ENCODE measurements at regions of chr2 and their contacts with region 1.

Region 1: GRCh38 chr2:80326214-80326613 is 21.7 kb upstream of the LRRTM1 start:
- DNase-seq: peak; percentile 18
- ATAC-seq: no peak
- H3K4me3 ChIP-seq: no peak overlapping the region
- H3K27ac ChIP-seq: no peak overlapping the region
- H3K4me1 ChIP-seq: no peaks in the 10 kb centered on the region
- H3K27me3 ChIP-seq: no peaks in the 10 kb centered on the region
- CTCF ChIP-seq: peak; percentile 31; the same call in 1 of the 2 replicates
- EP300 ChIP-seq: no peak
- POLR2A ChIP-seq: no peak
- RAD21 ChIP-seq: no peak

Region 2: DNA sequence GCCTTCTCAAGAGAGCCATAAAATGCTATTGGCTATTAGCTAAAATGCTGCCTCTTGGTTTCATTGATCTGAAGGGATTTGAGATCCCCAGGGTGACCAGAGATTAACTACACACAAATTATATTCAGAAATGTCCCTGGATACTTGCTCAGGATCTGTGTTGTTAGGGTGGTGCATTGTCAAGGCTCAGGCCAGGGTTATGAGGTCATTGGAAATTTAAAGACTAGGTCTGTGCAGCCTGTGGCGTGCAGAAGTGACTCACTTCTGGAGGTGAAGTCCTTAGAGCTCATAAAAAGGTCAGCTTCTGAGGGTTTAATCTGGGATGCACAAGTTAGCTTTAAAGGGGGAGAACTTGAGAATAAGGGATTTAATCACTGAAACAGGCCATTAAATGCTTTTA is 45.2 kb before region 1 on chr2:
- CTCF ChIA-PET with region 1: no interaction called
- POLR2A ChIA-PET with region 1: no interaction called
- in situ Hi-C with region 1: no loop called
- intact Hi-C with region 1: no loop called
- DNase-seq: no peak
- ATAC-seq: no peak
- H3K4me3 ChIP-seq: no peak overlapping the region
- H3K27ac ChIP-seq: no peak overlapping the region
- H3K4me1 ChIP-seq: no peaks in the 10 kb centered on the region
- H3K27me3 ChIP-seq: no peaks in the 10 kb centered on the region
- CTCF ChIP-seq: no peak
- EP300 ChIP-seq: no peak
- POLR2A ChIP-seq: no peak
- RAD21 ChIP-seq: no peak

Region 3: GRCh38 chr2:82023710-82024109 is 1697.5 kb after region 1 on chr2:
- CTCF ChIA-PET with region 1: no interaction called
- POLR2A ChIA-PET with region 1: no interaction called
- in situ Hi-C with region 1: no loop called
- intact Hi-C with region 1: loop called (anchors 10 kb)
- DNase-seq: no peak
- ATAC-seq: peak; percentile 64
- H3K4me3 ChIP-seq: no peak overlapping the region
- H3K27ac ChIP-seq: no peak overlapping the region
- H3K4me1 ChIP-seq: no peaks in the 10 kb centered on the region
- H3K27me3 ChIP-seq: no peaks in the 10 kb centered on the region
- CTCF ChIP-seq: peak; percentile 51
- EP300 ChIP-seq: no peak
- POLR2A ChIP-seq: no peak
- RAD21 ChIP-seq: no peak

Measured in HepG2 (cell line).